ENCODE measurements at regions of chr11 and their contacts with region 1.

Region 1: DNA sequence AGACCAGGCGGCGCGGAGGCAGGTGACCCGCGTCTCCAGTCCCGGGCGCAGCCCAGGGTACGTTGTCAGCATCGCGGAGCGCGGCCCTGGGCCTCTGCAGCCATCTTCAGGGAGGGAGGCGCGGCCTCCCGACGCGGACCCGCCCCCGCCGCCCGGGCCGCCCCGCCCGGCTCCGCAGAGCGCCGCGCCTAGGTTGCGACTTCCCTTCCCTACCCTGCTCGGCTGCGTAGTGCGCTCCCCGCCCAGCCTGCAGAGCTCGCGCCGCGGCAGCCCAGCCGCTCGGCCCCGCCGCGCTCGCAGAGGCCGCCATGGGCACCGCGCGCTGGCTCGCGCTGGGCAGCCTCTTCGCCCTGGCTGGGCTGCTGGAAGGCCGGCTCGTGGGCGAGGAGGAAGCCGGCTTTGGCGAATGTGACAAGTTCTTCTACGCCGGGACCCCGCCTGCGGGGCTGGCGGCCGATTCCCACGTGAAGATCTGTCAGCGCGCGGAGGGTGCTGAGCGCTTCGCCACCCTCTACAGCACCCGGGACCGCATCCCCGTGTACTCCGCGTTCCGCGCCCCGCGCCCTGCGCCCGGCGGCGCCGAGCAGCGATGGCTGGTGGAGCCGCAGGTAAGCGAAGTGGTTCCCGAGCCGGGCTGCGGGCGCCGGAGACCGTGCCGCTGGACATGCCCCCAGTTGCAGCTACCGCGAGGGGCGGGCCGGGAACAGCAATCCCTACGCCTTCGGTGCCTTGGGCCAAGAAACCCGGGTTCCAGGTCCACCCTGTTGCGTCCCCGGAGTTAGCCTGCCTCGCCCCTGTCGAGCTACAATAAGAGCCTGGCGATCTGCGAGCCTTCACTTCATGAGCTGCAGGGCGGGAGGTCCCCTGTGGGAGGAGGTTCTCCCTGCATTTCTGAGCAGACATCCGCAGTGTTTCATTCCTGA is at the start of gene ENDOD1:
- DNase-seq: peak; percentile 78 to 89 (median 86)
- ATAC-seq: peak; percentile 91 to 94
- H3K4me3 Mint-ChIP-seq: peak within 1 kb of the TSS; percentile 87 to 97 (median 91)
- H3K27ac Mint-ChIP-seq: peak within 1 kb of the TSS; percentile 95 to 99 (median 98)
- H3K4me1 Mint-ChIP-seq: peaks cover 28 to 57% (median 46%) of the 10 kb centered on the region in 4 donors
- H3K27me3 Mint-ChIP-seq: no peaks in the 10 kb centered on the region
- polyA plus RNA-seq, gene ENDOD1: 3.9 to 10.1 (median 6.9) TPM

Region 2: DNA sequence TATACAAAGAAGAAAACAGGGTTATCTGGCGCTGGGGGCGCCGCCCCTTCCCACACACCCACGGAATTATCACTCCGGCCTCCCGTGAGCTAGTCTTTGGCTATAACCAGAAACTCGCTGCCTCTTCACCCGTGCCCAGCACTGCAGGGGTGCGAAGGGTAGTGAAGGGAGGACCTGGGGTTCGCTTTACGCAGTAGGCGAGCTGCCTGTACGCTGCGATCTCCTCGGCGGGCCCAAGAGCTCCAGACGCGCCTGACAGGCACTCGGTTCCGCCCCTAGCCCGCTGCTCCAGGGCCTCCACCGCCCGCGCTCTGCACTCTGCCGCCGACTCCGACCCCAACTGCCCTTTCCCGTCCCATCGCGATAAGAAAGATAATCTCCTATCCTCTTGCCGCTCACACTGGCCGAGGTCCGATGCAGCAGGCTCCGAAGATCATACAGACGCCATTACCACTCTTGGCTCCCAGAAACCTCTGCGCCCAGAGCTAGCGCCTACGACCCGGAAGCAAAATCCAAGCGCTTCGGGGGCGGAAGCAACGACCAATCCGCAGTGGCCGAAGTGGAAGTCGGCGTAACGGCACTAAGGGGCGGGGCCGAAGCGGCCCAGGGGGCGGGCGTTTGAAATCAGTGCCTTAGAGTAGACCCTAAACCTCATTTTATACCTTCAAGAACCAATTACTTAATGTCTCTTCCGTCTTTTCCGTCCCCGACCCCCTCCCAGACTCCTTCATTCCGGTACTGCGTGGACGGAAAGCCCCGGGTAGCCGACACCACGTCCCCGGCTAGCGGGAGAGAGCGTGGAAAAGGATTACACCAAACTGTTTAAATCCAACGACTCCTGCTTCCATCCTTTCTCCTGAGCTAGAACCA is 116.5 kb before region 1 on chr11 and contains the starts of genes CWC15 and KDM4D:
- POLR2A ChIA-PET with region 1: interaction called, 15 read pairs
- DNase-seq: peak; percentile 89 to 98 (median 94)
- ATAC-seq: peak; percentile 97 to 98
- H3K4me3 Mint-ChIP-seq: peak within 1 kb of the TSS; percentile 94 to 100 (median 99)
- H3K27ac Mint-ChIP-seq: peak within 1 kb of the TSS; percentile 95 to 99 (median 99)
- H3K4me1 Mint-ChIP-seq: peaks cover 10 to 37% (median 26%) of the 10 kb centered on the region in 4 donors
- H3K27me3 Mint-ChIP-seq: peaks cover 0 to 1% (median 0%) of the 10 kb centered on the region in 5 donors
- polyA plus RNA-seq, gene CWC15: 47.6 to 61.3 (median 51.5) TPM
- polyA plus RNA-seq, gene KDM4D: 0.13 to 0.24 (median 0.17) TPM

Region 3: GRCh38 chr11:95067039-95067840 is 22.6 kb before region 1 on chr11:
- POLR2A ChIA-PET with region 1: interaction called, 180 read pairs
- DNase-seq: peak; percentile 50 to 83 (median 73)
- ATAC-seq: peak; percentile 74 to 75
- H3K4me3 Mint-ChIP-seq: peak overlapping the region; percentile 94 to 100 (median 98)
- H3K27ac Mint-ChIP-seq: peak overlapping the region; percentile 97 to 100 (median 99)
- H3K4me1 Mint-ChIP-seq: peaks cover 10 to 34% (median 29%) of the 10 kb centered on the region in 4 donors
- H3K27me3 Mint-ChIP-seq: no peaks in the 10 kb centered on the region

Region 4: DNA sequence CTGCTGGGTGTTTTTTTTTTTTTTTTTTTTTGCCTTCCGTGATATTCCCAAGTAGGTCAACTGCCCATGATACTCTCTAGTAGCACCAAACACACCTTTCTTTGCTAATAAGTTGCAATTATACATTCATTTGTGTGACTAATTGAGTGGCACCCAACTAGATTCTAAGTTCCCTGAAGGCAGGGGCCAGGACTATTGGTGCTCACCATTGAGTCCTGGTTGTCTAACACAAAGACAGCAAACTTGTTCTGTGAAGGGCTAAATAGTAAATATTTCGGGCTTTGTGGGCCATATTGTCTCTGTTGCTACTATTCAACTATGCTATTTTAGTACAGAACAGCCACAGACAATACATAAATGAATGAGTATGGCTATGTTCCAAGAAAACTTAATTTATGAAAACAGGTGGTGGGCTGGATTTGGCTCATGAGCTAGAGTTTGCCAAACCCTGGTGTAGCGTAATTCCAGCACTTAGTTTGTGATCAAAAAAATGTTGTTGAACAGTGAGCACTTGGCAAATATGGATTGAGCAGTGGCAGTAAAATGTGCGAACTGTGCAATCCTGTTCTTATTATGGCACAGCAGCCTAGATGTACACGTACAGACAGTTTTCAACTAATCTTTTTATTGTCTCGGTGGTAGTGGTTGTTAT is 11.1 kb after region 1 on chr11:
- POLR2A ChIA-PET with region 1: interaction called, 10 read pairs
- DNase-seq: no peak
- ATAC-seq: no peak
- H3K4me3 Mint-ChIP-seq: no peak overlapping the region
- H3K27ac Mint-ChIP-seq: no peak overlapping the region
- H3K4me1 Mint-ChIP-seq: peaks cover 9 to 40% (median 27%) of the 10 kb centered on the region in 4 donors
- H3K27me3 Mint-ChIP-seq: no peaks in the 10 kb centered on the region

Region 5: DNA sequence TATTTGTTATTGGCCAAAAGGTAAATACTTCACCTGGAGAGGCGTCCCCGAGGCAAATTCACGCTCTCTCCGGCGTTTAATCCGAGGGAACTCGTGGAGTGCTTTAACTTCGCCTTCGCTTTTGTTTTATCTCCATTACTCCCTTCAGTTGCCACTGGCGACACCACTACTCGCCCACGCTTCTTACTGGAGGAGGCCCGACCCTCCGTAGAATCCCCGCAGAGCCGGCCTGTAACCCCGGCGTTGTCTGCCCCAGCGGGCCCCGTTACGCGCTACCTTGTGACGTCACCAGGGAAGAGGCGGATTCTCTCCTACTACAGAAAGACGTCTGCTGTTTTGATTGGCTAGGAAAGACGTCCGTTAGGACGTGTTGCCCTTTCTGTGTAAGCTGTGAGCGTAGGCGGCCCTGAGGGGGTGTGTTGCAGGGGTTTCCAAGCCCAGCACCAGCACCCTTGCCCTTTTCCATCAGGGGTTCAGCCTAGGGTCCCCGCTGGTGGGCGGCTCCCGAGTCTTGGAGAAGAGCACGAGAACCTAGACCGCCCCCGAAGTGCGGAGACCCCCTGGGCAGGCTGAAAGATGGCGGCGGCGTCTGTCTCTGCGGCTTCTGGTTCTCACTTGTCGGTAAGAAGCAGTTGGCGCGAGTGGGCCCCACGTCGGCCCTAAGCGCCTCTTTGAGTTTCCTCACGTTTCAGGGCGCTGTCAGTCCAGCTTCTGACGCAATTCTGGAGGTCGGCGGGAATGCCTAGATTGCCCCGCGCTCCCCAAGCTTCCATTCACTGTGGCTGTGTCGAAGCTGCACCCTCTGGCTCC is 700.4 kb after region 1 on chr11 and contains the start of gene CEP57:
- POLR2A ChIA-PET with region 1: interaction called, 28 read pairs
- DNase-seq: peak in 9 of 10 donors; percentile 74 to 98 (median 93)
- ATAC-seq: peak; percentile 60 to 61
- H3K4me3 Mint-ChIP-seq: peak within 1 kb of the TSS; percentile 99 to 100 (median 100)
- H3K27ac Mint-ChIP-seq: peak within 1 kb of the TSS; percentile 99 to 100 (median 100)
- H3K4me1 Mint-ChIP-seq: peaks cover 24 to 66% (median 61%) of the 10 kb centered on the region in 4 donors
- H3K27me3 Mint-ChIP-seq: peaks cover 0 to 4% (median 0%) of the 10 kb centered on the region in 5 donors
- polyA plus RNA-seq, gene CEP57: 53.0 to 64.2 (median 60.8) TPM